Activated CD4-positive, alpha-beta memory T cell treated with anti-CD3 and anti-CD28 coated beads for 36 hours (primary cell): ENCODE measurements at regions of chr18 and their contacts with region 1.

Region 1: DNA sequence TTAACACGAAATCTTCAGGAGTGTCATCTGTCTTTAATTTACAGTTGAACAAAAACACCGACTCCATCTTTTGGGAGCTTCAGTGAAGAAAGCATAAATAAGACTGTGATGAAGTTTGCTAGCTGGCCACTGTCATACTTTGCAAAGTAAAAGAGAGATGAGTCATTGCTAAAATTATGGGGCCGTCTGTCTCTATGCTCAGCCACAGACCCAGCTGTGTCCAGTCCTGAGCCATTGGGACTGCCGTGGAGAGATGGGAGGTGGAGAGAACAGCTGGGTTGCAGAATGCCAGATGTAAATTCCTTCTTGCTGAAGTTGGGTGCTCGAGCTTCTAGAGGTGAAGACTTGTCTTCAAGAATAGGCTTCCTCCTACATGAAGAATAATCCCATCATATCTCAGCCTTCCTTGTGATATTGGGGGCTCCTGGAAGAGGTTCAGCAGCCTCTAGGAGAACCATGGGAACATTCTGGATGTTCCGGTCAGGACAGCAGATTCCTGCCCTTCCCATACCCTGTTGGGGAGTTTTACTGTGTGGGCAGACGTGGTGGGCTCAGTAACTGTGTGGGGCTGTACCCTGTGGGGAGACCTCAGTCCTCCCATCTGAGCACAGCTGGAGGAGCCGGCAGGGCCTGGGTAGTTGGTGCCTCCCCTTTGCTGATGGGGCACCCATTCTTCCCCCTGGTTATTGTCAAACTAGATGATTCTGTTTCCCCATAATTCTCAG is 71.1 kb downstream of the LDLRAD4 start:
- DNase-seq: no peak
- H3K4me3 Mint-ChIP-seq: no peak overlapping the region
- H3K27ac Mint-ChIP-seq: peak overlapping the region; percentile 82
- H3K4me1 Mint-ChIP-seq: peaks cover 47% of the 10 kb centered on the region
- H3K27me3 Mint-ChIP-seq: peaks cover 8% of the 10 kb centered on the region

Region 2: DNA sequence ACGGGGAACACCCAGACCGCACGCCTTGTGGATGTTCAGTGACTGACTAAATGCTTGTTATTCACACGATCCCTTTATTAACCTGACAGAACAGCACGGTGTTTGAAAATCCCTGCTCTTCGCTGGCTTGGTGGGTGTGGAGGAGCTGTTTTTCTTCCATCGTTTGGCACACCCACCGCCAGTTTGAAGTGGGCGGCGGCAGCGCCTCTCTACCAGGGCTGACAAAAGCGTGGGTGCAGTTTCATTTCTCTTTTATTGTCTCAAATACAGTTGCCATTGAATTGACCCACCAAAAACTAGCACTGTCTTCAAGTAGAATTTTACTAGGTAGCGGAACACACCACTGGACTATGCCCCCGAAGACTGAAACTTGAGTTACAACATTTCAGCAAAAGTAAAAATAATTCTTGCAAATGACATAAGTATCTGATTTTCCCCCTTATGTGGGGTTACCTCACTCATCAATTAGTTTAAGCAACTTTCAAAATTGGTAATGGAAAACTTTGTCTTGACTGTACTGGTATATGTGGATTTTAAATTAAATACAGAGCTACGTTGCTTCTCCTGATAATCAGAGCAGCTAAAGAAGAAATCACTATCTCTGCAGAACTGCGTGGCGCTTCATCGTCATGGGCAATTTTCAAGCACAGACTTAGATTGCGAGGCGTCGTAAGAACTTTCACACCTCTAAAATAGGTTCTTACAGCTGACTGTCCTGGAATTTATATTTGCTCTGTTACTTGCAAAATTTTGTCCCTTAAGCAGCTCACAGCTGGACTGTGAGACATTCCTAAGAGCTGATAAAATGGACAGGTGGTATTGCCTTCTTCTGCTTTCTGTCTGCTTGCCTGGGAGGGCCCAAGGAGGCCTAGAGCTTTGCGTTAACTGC is 10.2 kb before region 1 on chr18:
- CTCF ChIA-PET with region 1: no interaction called
- POLR2A ChIA-PET with region 1: interaction called, 6 read pairs
- intact Hi-C with region 1: loop called (anchors 1 kb)
- DNase-seq: peak; percentile 69
- H3K4me3 Mint-ChIP-seq: peak overlapping the region; percentile 57
- H3K27ac Mint-ChIP-seq: peak overlapping the region; percentile 69
- H3K4me1 Mint-ChIP-seq: peaks cover 78% of the 10 kb centered on the region
- H3K27me3 Mint-ChIP-seq: peaks cover 3% of the 10 kb centered on the region